ENCODE measurements at regions of chr11 and their contacts with region 1.

Region 1: DNA sequence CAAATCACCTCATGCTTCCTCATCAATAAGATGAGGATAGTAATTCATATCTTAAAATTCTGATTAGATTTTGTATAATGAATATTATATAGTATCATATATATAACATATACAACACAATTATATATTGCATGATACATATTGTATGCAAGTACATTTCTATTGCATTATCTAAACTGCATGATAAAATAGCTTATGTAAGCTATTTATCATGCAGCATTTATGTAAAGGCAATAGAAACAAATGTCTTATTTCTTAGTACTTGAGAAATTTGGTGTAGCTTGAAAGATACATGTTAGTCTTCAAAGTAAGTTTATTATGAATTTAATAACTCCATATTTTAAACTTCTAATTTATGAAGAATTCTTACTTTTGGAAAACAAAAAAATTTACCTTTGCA is 5.5 kb downstream of the LIN7C start:
- DNase-seq: no peak
- H3K4me3 ChIP-seq: no peak overlapping the region
- H3K27ac ChIP-seq: no peak overlapping the region
- H3K4me1 ChIP-seq: no peaks in the 10 kb centered on the region
- H3K27me3 ChIP-seq: no peaks in the 10 kb centered on the region
- CTCF ChIP-seq: no peak
- EP300 ChIP-seq: no peak
- POLR2A ChIP-seq: no peak

Region 2: GRCh38 chr11:28566339-28567089 is 1065.4 kb after region 1 on chr11:
- intact Hi-C with region 1: loop called in 1 of 4 experiments (anchors 5 kb)
- DNase-seq: peak; percentile 74 to 88 (median 81)
- H3K4me3 ChIP-seq: no peak overlapping the region
- H3K27ac ChIP-seq: peak overlapping the region in 1 of 2 donors; percentile 58
- H3K4me1 ChIP-seq: peaks cover 2% of the 10 kb centered on the region
- H3K27me3 ChIP-seq: no peaks in the 10 kb centered on the region
- CTCF ChIP-seq: no peak
- EP300 ChIP-seq: no peak
- POLR2A ChIP-seq: peak; percentile 19

Measured in ovary (tissue), 10 donors.